ENCODE measurements at regions of chr14 and their contacts with region 1.

Region 1: DNA sequence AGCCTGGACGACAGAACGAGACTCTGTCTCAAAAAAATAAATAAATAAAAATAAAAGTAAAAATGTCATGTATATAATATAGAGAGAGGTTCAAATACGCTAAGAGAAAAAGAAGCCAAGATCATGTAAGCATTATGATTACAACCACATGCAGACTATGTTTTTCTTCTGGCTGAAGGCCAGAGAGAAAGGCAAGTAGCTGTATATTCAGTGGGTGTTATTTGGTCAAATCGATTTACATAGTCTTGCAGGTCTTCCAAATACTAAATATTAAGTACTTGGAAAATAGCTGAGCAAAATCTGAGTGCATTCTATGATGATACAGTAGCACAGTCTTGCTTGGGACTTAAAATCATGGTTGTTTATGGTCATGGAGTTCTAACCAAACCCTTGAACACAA is 758.0 kb downstream of the DIO2 start:
- DNase-seq: no peak
- ATAC-seq: no peak
- H3K4me3 ChIP-seq: no peak overlapping the region
- H3K27ac ChIP-seq: no peak overlapping the region
- H3K4me1 ChIP-seq: no peaks in the 10 kb centered on the region
- H3K27me3 ChIP-seq: no peaks in the 10 kb centered on the region
- CTCF ChIP-seq: no peak

Region 2: GRCh38 chr14:79404874-79405511 is 48.3 kb before region 1 on chr14:
- CTCF ChIA-PET with region 1: no interaction called
- POLR2A ChIA-PET with region 1: no interaction called
- intact Hi-C with region 1: no loop called
- DNase-seq: no peak
- ATAC-seq: no peak
- H3K4me3 ChIP-seq: no peak overlapping the region
- H3K27ac ChIP-seq: no peak overlapping the region
- H3K4me1 ChIP-seq: no peaks in the 10 kb centered on the region
- H3K27me3 ChIP-seq: no peaks in the 10 kb centered on the region
- CTCF ChIP-seq: no peak

Region 3: DNA sequence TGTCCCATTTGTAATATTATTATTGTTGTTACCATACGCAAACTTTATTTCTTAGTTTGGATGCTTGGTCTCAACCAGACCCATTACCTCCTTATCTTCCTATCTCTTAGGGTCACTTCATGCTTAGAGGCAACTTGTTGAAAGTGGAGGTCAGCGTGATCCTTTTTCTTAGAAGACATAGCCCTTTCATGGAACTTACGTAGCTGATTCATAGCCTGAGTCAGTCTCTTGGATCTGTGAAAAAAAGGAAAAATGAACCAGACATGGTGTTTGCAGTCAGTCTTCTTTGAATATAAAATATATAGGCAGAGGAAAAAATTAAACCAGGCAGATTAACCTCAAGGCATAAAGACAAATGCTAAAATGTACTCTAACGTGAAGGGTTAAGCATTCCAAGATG is 144.3 kb after region 1 on chr14:
- CTCF ChIA-PET with region 1: no interaction called
- POLR2A ChIA-PET with region 1: interaction called, 28 read pairs
- intact Hi-C with region 1: no loop called
- DNase-seq: no peak
- ATAC-seq: no peak
- H3K4me3 ChIP-seq: no peak overlapping the region
- H3K27ac ChIP-seq: no peak overlapping the region
- H3K4me1 ChIP-seq: no peaks in the 10 kb centered on the region
- H3K27me3 ChIP-seq: no peaks in the 10 kb centered on the region
- CTCF ChIP-seq: no peak

Measured in PC-3 (cell line).